H1 (cell line): ENCODE measurements at regions of chr4 and their contacts with region 1.

Region 1: GRCh38 chr4:112938461-112939058 is 110.9 kb upstream of the ANK2 start:
- DNase-seq: no peak
- H3K4me3 ChIP-seq: no peak overlapping the region
- H3K27ac ChIP-seq: no peak overlapping the region
- H3K4me1 ChIP-seq: peaks cover 0 to 2% (median under 1%) of the 10 kb centered on the region in 4 experiments; a peak in 1 of 7 replicates
- H3K27me3 ChIP-seq: no peaks in the 10 kb centered on the region
- CTCF ChIP-seq: peak in 2 of 3 experiments; percentile 53 to 63; a peak in 2 of 4 replicates
- EP300 ChIP-seq: no peak
- POLR2A ChIP-seq: no peak
- RAD21 ChIP-seq: peak; percentile 84 to 88

Region 2: GRCh38 chr4:112853662-112854256 is 84.8 kb before region 1 on chr4:
- CTCF ChIA-PET with region 1: interaction called, 49 read pairs
- POLR2A ChIA-PET with region 1: interaction called, 3 read pairs
- DNase-seq: no peak
- H3K4me3 ChIP-seq: no peak overlapping the region
- H3K27ac ChIP-seq: no peak overlapping the region
- H3K4me1 ChIP-seq: peaks cover 0 to 6% (median 4%) of the 10 kb centered on the region in 4 experiments; a peak in 3 of 7 replicates
- H3K27me3 ChIP-seq: no peaks in the 10 kb centered on the region
- CTCF ChIP-seq: peak in 1 of 3 experiments; percentile 48; a peak in 2 of 4 replicates
- EP300 ChIP-seq: no peak
- POLR2A ChIP-seq: no peak
- RAD21 ChIP-seq: peak; percentile 34 to 36; a peak in 3 of 4 replicates

Region 3: DNA sequence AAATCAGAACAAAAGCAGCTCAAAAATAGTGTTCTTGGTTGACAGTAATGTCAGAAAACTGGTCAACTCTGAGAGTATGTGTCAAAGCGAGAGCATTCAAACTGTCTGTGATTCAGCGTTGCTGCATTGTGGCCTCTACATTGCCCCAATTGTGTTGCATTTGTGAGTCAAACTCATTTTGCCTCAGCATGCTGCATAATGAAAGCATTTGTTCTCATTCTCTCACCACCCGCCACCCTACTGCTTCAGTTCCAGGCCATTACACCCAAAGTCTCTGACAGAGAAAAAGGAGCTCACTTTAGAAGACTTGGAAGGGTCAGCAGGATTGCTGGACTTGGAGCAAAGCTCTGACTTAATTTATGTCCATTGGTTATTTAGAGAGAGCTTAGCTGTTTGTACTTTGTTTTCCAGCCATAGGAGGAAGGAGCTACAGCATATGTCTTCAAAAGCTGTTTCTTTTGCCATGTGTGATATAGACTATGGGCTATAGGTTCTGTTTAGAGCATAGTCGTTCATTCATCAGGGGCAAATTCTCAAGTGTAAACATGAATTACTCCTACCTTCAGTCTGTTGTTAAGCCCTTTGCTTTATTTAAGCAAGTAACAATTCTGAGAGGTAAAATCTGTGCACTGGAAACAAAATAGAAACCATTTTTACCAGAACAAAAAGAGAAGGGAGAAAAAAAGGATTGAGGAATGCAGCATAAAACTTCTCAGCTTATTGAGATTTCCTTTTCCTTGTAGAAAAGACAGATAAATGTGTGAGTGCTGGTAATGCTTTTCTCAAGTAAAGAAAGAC is 42.5 kb before region 1 on chr4:
- CTCF ChIA-PET with region 1: interaction called, 20 read pairs
- POLR2A ChIA-PET with region 1: no interaction called
- DNase-seq: peak in 1 of 2 experiments; percentile 38
- H3K4me3 ChIP-seq: peak overlapping the region in 1 of 4 experiments; percentile 4; a peak in 1 of 8 replicates
- H3K27ac ChIP-seq: no peak overlapping the region
- H3K4me1 ChIP-seq: peaks cover 6 to 26% (median 19%) of the 10 kb centered on the region in 4 experiments; a peak in 5 of 7 replicates
- H3K27me3 ChIP-seq: no peaks in the 10 kb centered on the region
- CTCF ChIP-seq: no peak
- EP300 ChIP-seq: no peak
- POLR2A ChIP-seq: no peak
- RAD21 ChIP-seq: 0 out of 4 replicates have a peak, but pooled peaks of 1 of the 2 experiments have one; percentile 3

Region 4: GRCh38 chr4:112910109-112910736 is 28.3 kb before region 1 on chr4:
- CTCF ChIA-PET with region 1: interaction called, 20 read pairs
- POLR2A ChIA-PET with region 1: no interaction called
- DNase-seq: no peak
- H3K4me3 ChIP-seq: no peak overlapping the region
- H3K27ac ChIP-seq: no peak overlapping the region
- H3K4me1 ChIP-seq: no peaks in the 10 kb centered on the region
- H3K27me3 ChIP-seq: no peaks in the 10 kb centered on the region
- CTCF ChIP-seq: no peak
- EP300 ChIP-seq: no peak
- POLR2A ChIP-seq: no peak
- RAD21 ChIP-seq: no peak

Region 5: DNA sequence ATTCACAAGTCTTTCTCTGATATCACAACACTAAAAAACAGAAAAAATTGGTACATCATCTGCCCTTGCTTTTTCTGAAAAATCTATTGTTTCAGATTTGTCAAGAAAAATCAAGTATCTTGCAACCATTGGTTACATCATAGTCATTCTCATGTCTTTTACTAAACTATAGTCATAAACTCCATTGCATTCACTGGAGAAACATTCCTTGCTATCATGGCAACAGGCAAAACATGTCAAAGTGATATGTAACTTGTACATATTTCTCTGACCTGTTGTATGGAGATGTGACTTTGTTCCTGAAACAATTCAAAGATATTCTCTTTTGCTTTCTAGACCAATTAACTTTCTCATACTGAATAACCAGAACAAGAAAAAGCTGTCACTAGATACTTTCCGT is 11.0 kb before region 1 on chr4:
- CTCF ChIA-PET with region 1: interaction called, 32 read pairs
- POLR2A ChIA-PET with region 1: no interaction called
- DNase-seq: no peak
- H3K4me3 ChIP-seq: no peak overlapping the region
- H3K27ac ChIP-seq: no peak overlapping the region
- H3K4me1 ChIP-seq: no peaks in the 10 kb centered on the region
- H3K27me3 ChIP-seq: no peaks in the 10 kb centered on the region
- CTCF ChIP-seq: no peak
- EP300 ChIP-seq: no peak
- POLR2A ChIP-seq: no peak
- RAD21 ChIP-seq: no peak

Region 6: DNA sequence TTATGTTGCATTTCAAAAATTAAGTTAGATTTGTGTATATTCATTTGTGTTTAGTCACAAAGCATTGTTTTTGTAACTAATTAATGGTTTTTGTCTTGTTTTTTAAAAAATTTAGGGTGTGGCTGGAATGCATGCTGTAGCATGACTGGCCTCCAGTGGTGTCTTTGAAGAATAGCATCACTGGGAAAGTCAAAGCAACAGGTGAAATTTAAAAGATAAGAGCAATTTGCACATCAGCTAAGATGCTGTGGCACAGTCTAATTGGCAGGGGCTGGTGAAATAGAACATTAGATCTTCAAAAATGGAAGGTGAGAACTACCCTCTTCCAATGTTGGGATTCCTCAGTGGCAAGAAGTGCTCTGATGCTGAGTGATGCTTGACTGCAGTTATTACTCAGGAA is 156.2 kb after region 1 on chr4:
- CTCF ChIA-PET with region 1: interaction called, 11 read pairs
- POLR2A ChIA-PET with region 1: no interaction called
- DNase-seq: no peak
- H3K4me3 ChIP-seq: no peak overlapping the region
- H3K27ac ChIP-seq: no peak overlapping the region
- H3K4me1 ChIP-seq: no peaks in the 10 kb centered on the region
- H3K27me3 ChIP-seq: no peaks in the 10 kb centered on the region
- CTCF ChIP-seq: peak in 2 of 3 experiments; percentile 68 to 75; a peak in 3 of 4 replicates
- EP300 ChIP-seq: no peak
- POLR2A ChIP-seq: no peak
- RAD21 ChIP-seq: peak; percentile 92